H1 (cell line): ENCODE measurements at regions of chr15 and their contacts with region 1.

Region 1: DNA sequence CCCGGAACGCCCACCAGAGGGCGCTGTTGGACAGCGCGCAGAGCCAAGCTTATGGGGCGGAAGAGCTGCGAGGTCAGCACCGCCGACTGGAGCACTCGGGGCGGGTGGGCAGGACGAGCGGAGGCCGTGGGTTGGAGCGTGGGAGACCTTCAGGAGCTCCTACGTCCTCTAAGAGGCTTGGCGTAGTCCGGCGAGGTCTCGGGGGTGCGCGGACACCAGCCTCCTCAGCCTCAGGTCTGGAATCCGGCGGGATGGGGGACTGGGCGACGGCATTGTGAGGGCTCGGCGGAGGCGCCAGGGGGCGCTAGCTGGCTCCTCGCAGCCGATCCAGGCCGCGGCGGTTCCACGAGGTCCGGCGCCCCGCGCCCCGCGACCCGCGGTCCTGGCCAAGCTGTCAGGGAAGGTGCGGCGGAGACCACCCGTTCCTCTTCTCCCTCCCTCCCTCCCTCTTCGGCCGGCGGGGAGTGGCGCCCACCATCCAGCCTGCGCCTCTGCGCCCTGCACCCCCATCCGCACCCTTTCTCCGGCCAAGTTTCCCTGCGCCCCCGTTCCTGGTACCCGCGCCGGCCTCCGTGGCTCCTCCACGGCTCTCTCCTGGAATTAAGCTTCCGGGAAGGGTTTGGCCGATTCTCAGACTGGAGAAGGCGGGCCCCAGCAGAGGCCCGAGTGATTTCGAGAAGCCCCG is 24.3 kb upstream of the POLG start:
- DNase-seq: peak in 1 of 2 experiments; percentile 93
- H3K4me3 ChIP-seq: peak overlapping the region in 3 of 4 experiments; percentile 25 to 58 (median 45); a peak in 5 of 8 replicates
- H3K27ac ChIP-seq: no peak overlapping the region
- H3K4me1 ChIP-seq: peaks cover 0 to 27% (median 13%) of the 10 kb centered on the region in 4 experiments; a peak in 5 of 7 replicates
- H3K27me3 ChIP-seq: peaks cover 63 to 82% (median 72%) of the 10 kb centered on the region in 4 experiments
- CTCF ChIP-seq: peak in 2 of 3 experiments; percentile 67 to 95; a peak in 3 of 4 replicates
- EP300 ChIP-seq: no peak
- POLR2A ChIP-seq: no peak
- RAD21 ChIP-seq: peak; percentile 88 to 92

Region 2: GRCh38 chr15:89321521-89322410 is 37.1 kb before region 1 on chr15:
- CTCF ChIA-PET with region 1: no interaction called
- POLR2A ChIA-PET with region 1: no interaction called
- DNase-seq: no peak
- H3K4me3 ChIP-seq: no peak overlapping the region
- H3K27ac ChIP-seq: no peak overlapping the region
- H3K4me1 ChIP-seq: no peaks in the 10 kb centered on the region
- H3K27me3 ChIP-seq: no peaks in the 10 kb centered on the region
- CTCF ChIP-seq: peak in 2 of 3 experiments; percentile 26 to 44; a peak in 3 of 4 replicates
- EP300 ChIP-seq: no peak
- POLR2A ChIP-seq: no peak
- RAD21 ChIP-seq: peak in 1 of 2 experiments; percentile 23; a peak in 1 of 4 replicates

Region 3: DNA sequence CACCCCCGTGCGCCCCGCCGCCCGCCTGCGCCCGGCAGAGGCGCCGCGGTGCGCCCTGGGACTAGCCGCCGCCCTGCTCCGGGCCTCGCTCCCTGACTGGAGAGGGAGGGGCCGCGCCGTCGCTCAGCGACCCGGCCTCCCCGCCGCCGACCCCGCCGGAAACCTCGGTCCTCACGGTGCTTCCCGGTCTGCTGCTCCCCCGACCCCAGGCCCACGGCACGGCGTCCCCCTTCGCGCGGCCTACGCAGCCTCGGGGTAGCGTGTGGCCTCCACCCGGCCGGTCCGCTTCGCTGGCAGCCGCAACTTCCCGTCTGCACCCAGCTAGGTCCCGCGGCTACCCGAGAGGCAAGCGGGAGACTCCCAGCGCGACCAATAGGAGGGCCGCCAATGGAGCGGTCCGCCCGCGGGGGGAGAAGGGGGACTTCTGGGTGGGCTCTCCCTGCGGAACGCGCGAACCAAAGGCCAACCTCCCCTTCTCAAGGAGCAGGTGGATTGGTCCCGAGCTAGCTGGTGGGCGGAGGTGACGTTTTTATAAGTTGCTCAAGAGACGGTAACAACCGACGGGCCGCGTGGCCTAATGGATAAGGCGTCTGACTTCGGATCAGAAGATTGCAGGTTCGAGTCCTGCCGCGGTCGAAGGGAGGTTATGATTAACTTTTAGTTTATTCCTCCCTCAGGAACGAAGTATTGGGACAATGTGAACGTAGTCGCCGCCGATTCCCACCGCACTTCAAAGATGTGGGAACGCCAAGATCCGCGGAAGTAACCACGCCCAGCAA is 24.2 kb before region 1 on chr15 and contains the start of gene POLG:
- CTCF ChIA-PET with region 1: interaction called, 48 read pairs
- POLR2A ChIA-PET with region 1: no interaction called
- DNase-seq: peak; percentile 98 to 99
- H3K4me3 ChIP-seq: peak within 1 kb of the TSS; percentile 79 to 93 (median 86)
- H3K27ac ChIP-seq: peak within 1 kb of the TSS; percentile 85
- H3K4me1 ChIP-seq: peaks cover 0 to 16% (median 3%) of the 10 kb centered on the region in 4 experiments; a peak in 4 of 7 replicates
- H3K27me3 ChIP-seq: no peaks in the 10 kb centered on the region; a peak in 1 of 7 replicates
- CTCF ChIP-seq: no peak
- EP300 ChIP-seq: peak in 1 of 2 experiments; percentile 100; a peak in 2 of 3 replicates
- POLR2A ChIP-seq: peak in 1 of 2 experiments; percentile 94; a peak in 2 of 3 replicates
- RAD21 ChIP-seq: no peak
- total RNA-seq, gene POLG: 52.3 and 53.4 TPM in 2 replicates

Region 4: GRCh38 chr15:89416141-89416853 is 57.4 kb after region 1 on chr15:
- CTCF ChIA-PET with region 1: interaction called, 412 read pairs
- POLR2A ChIA-PET with region 1: interaction called, 3 read pairs
- DNase-seq: peak; percentile 95 to 100
- H3K4me3 ChIP-seq: peak overlapping the region; percentile 34 to 64 (median 56)
- H3K27ac ChIP-seq: no peak overlapping the region
- H3K4me1 ChIP-seq: peaks cover 9 to 26% (median 14%) of the 10 kb centered on the region in 4 experiments
- H3K27me3 ChIP-seq: peaks cover 32 to 90% (median 77%) of the 10 kb centered on the region in 4 experiments
- CTCF ChIP-seq: peak; percentile 89 to 100 (median 99)
- EP300 ChIP-seq: no peak
- POLR2A ChIP-seq: no peak
- RAD21 ChIP-seq: peak; percentile 67 to 74

Region 5: DNA sequence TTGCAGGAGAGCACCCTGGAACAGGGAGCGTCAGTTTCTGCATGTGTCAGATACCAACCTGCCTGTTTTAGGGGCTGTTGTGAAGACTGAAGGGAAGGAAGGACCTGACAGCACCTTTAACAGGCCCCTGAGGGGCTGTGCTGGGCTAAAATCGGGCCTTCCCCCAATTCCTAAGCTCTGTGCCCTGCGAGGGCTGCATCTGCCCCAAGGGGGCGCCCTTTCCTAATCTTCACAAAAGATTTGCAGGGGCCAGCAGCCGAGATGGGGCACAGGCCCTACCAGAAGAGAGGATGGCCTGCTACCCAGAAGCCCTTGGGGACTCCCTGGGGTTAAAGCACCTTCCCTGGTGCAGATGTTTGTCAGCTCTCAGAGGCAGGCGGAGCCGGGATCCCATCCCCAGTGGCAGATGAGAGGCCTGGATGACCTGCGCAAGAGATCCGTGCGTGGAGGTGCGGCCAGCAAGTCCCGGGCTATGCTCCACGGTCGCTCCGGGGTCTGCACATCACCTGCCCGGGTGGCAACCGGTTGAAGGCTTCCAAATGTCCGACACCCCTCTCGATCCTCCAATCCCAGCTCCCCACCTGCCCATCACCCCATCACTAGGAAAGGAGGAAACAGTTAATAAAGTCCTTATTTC is 83.9 kb after region 1 on chr15:
- CTCF ChIA-PET with region 1: interaction called, 271 read pairs
- POLR2A ChIA-PET with region 1: no interaction called
- DNase-seq: peak; percentile 53 to 98
- H3K4me3 ChIP-seq: no peak overlapping the region
- H3K27ac ChIP-seq: no peak overlapping the region
- H3K4me1 ChIP-seq: peaks cover 2 to 18% (median 13%) of the 10 kb centered on the region in 4 experiments
- H3K27me3 ChIP-seq: peaks cover 0 to 2% (median 0%) of the 10 kb centered on the region in 4 experiments; a peak in 3 of 7 replicates
- CTCF ChIP-seq: peak; percentile 77 to 90 (median 80)
- EP300 ChIP-seq: no peak
- POLR2A ChIP-seq: no peak
- RAD21 ChIP-seq: peak; percentile 84 to 91

Region 6: GRCh38 chr15:89472785-89473256 is 113.9 kb after region 1 on chr15:
- CTCF ChIA-PET with region 1: interaction called, 205 read pairs
- POLR2A ChIA-PET with region 1: interaction called, 4 read pairs
- DNase-seq: peak; percentile 79 to 95
- H3K4me3 ChIP-seq: no peak overlapping the region
- H3K27ac ChIP-seq: no peak overlapping the region
- H3K4me1 ChIP-seq: peaks cover 5 to 15% (median 11%) of the 10 kb centered on the region in 4 experiments
- H3K27me3 ChIP-seq: no peaks in the 10 kb centered on the region; a peak in 3 of 7 replicates
- CTCF ChIP-seq: peak; percentile 98 to 100 (median 99)
- EP300 ChIP-seq: no peak
- POLR2A ChIP-seq: no peak
- RAD21 ChIP-seq: peak; percentile 98 to 100

Region 7: GRCh38 chr15:89496155-89497098 is 137.5 kb after region 1 on chr15 and contains the start of gene RHCG:
- CTCF ChIA-PET with region 1: interaction called, 59 read pairs
- POLR2A ChIA-PET with region 1: no interaction called
- DNase-seq: peak; percentile 69 to 83
- H3K4me3 ChIP-seq: peak within 1 kb of the TSS; percentile 30 to 62 (median 48)
- H3K27ac ChIP-seq: no peak within 1 kb of the TSS
- H3K4me1 ChIP-seq: peaks cover 0 to 6% (median 4%) of the 10 kb centered on the region in 4 experiments; a peak in 6 of 7 replicates
- H3K27me3 ChIP-seq: peaks cover 2 to 25% (median 19%) of the 10 kb centered on the region in 4 experiments
- CTCF ChIP-seq: peak; percentile 81 to 96 (median 88)
- EP300 ChIP-seq: no peak
- POLR2A ChIP-seq: peak in 1 of 2 experiments; percentile 39; a peak in 1 of 3 replicates
- RAD21 ChIP-seq: peak; percentile 58 to 61
- total RNA-seq, gene RHCG: 0.46 TPM in 1 of 2 replicates, not detected in the other